Activated CD8-positive, alpha-beta T cell treated with anti-CD3 and anti-CD28 coated beads for 36 hours (primary cell): ENCODE measurements at regions of chr6 and their contacts with region 1.

Region 1: GRCh38 chr6:125779924-125780539 is 10.7 kb upstream of the NCOA7 start:
- DNase-seq: peak; percentile 88
- ATAC-seq: peak; percentile 82
- H3K4me3 Mint-ChIP-seq: no peak overlapping the region
- H3K27ac Mint-ChIP-seq: no peak overlapping the region
- H3K4me1 Mint-ChIP-seq: peaks cover 16% of the 10 kb centered on the region
- H3K27me3 Mint-ChIP-seq: no peaks in the 10 kb centered on the region
- CTCF ChIP-seq: no peak

Region 2: DNA sequence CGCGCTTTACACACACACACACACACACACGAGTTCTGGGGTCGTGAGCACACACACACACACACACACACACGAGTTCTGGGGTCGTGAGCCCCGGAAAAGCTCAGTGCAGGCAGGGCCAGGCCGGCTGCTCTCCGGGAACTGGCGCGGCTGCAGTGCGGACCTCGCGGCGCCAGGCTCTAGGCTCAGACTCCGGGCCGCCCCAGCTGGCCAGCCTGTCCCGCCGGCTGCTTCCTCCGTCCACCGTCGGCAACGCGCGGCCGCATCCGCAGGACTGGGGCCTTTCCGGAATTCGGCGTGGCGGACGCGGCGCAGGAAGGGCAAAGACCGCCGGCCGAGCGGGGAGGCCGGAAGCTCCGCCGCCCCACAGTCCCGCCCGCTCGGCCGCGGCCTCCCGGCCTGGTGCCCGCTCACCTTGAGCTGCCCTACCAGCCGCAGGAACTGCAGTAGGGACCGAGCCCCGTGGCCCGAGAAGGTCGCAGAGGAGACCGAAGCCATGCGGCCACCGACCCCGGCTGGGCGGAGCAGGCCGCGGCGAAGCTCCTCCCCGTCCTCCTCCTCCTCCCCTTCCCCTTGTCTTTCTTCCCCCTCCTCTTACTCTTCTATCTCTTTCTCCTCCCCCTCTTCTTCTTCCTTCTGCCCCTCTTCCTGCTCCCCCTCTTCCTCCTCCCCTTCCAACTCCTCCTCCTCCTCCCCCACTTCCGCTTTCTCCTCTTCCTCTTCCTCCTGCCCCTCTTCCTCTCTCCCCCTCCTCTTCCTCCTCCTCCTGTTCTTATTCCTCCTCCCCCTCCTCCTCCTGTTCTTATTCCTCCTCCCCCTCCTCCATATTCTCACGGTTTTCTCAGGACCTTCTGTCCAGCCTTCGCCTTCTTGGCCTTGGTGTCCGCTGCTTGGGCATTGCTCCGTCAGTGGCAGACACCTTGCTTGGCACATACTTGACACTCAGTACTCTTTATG is 478.3 kb before region 1 on chr6 and contains the start of gene HDDC2:
- CTCF ChIA-PET with region 1: no interaction called
- POLR2A ChIA-PET with region 1: interaction called, 12 read pairs
- intact Hi-C with region 1: no loop called
- DNase-seq: peak; percentile 47
- ATAC-seq: peak; percentile 76
- H3K4me3 Mint-ChIP-seq: peak within 1 kb of the TSS; percentile 89
- H3K27ac Mint-ChIP-seq: peak within 1 kb of the TSS; percentile 92
- H3K4me1 Mint-ChIP-seq: peaks cover 44% of the 10 kb centered on the region
- H3K27me3 Mint-ChIP-seq: no peaks in the 10 kb centered on the region
- CTCF ChIP-seq: no peak
- total RNA-seq, gene HDDC2: 119 to 121 TPM